ENCODE measurements at regions of chr10 and their contacts with region 1.

Region 1: DNA sequence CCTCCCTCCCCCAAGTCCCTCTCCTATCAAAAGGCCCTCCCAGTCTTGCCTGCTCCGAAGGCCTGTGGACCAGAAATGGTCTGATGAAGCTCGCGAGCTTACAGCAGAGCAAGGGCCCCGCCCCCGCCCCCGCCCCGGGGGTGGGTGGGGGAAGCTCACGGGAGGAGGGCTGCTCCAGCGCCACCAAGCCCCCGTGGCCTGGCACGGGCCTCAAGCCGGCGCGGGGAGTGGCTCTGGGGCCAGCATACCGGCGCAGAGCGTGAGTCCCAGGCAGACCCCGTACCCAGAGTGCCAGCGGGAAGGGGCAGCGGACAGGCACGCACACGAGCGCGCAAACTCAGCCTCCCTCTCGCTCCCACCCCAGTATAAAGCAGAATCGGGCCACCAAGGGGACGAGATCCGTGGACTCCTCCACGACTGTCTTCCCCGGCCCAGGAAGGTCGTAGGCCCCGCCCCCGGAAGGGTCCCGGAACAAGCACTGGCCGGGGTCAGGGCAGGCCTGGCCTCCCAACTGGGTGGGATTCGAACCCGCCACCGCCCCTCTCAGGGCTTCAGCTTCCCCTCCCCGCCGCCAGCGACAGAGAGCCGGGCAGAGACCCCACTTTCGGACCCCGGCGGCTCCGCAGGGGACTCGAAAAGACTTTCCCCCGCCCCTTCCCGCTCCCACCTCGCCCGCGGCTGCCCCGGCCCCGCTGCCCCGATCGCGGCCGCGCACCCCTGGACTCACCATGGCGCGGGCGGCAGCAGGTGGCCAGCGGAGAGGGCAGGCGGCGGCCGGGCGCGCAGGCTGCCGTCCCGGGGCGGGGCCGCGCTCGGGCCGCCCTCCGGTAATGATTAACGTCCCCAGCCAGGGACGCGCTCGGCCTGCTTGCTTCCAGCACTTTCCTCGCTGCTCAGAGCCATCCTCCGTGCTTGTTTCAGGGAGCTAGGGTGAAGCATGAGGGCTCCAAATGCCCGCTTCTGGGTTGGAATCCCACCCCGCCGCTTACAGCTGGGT is at the start of gene PCBD1:
- DNase-seq: peak; percentile 87
- CTCF ChIP-seq: no peak

Region 2: DNA sequence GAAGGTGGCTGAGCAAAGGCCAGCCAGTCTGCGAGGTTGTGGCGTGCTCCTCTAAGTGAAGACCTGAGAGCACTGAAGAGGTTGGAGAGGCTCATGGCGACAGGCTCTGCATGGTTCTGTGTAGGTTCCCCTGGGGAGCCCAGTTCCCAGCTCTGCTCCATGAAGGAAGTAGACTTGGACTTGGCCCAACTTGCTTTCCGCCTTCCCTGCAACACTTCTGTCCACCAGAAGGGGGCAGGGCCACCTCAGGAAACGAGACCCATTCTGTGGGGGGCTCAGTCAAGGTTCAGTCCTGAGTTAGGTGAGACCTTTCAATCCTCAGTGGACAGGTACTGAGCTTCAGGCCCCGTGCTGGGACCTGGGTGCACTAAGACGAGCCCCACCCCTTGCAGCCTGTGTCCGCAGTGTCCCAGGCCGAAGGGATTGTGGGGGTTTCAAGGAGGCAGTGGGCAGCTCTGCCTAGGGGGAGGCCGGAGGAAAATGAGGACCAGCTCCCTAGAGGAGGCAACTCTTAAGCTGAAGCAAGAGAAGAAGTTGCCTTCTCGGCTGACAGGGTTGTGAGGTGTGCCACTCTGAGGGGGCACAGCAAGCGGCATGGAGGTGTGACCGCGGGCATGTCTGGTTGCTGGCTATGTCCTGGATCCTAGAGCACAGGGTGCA is 15.3 kb after region 1 on chr10:
- CTCF ChIA-PET with region 1: interaction called, 17 read pairs
- POLR2A ChIA-PET with region 1: no interaction called
- DNase-seq: peak; percentile 69
- CTCF ChIP-seq: peak; percentile 73

Region 3: DNA sequence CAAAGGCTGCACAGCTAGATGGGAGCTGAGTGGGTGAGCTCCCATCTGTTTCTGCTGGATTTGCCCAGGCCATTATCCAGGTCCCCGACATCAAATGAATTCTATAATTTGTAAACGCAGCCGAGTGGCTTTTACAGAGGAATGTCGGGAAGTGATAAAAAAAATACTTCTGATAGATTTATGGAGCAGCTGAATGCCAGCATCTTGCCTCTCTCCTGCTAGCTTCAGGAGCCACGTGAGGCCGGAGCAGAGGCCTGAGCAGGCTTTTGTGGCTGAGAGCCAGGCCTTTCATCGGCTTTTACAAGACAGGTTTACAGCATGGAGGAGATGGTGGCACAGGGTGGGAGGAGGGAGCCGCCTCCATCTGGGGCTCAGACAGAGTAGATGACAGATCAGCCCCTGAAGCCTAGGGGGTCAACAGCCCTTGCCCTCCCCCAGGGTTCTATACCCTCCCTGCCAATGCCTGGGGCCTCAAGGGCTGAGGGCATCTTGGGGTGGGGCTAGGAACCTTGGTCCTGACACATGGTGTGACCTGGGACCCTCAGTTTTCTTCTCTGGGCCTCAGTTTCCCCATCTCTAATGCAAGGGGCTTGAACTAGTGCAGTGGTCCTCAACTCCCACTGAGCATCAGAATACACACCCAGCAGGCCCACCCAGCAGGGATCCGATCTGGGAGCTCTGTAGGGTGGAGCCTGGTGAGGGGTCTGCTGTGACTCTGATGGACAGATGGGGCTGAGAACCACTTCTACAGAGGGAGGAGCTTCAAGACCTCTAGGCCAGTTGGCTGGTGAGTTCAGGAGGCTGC is 44.5 kb after region 1 on chr10:
- CTCF ChIA-PET with region 1: no interaction called
- POLR2A ChIA-PET with region 1: no interaction called
- DNase-seq: no peak
- CTCF ChIP-seq: no peak

Region 4: DNA sequence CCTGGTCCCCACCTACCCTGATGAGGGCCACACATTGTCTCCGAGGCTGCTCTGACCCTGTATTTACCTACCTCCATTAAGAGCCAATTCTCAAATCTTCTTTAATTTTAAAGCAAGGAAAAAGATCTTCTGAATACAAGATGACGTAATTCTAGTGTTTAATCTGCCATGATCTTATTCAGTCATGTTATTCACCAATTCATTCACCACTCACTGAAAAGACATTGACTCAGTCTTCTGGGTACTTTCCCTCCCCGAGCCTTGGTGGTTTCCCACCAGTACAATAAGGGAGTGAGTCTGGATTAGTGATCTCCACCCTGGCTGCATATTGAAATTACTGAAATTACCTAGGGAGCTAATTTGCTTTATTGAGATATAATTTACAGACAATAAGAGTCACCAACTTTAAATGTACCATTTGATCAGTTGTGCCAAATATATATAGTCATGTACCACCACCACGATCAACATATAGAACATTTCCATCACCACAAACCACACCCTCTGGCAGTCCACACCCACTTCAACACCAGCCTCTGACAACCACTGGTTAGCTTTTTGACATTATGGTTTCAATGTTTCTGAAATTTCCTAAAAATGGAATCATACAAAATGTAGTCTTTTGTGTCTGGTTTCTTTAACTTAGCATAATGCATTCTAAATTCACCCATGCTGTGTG is 206.7 kb after region 1 on chr10:
- CTCF ChIA-PET with region 1: no interaction called
- POLR2A ChIA-PET with region 1: no interaction called
- DNase-seq: peak; percentile 14
- CTCF ChIP-seq: no peak